ENCODE measurements at regions of chr11 and their contacts with region 1.

Region 1: GRCh38 chr11:13023423-13023822 is 14.3 kb downstream of the RASSF10 start:
- DNase-seq: no peak
- H3K4me3 ChIP-seq: no peak overlapping the region
- H3K27ac ChIP-seq: no peak overlapping the region
- H3K27me3 ChIP-seq: peaks cover 0 to 8% (median 0%) of the 10 kb centered on the region in 45 donors
- CTCF ChIP-seq: no peak

Region 2: DNA sequence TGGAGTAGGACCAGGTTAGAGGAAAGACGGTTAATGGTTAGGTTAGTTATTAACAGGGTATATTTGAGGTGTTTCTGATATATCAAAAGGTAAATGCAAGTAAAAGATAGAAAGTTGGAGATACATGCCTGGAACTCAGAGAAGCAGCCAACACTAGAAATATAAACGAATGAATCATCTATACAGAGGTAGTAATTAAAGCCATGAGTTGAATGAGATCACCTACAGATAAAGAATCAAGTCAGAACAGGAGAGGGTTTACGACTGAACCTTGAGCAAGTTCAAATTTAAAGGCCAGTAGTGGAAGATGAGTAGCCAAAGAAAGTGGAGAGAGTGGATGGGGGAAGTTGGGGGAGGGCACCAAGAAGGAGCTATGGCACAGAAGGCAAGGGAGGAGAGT is 1013.0 kb after region 1 on chr11:
- intact Hi-C with region 1: loop called in 1 of 2 experiments (anchors 5 kb)
- DNase-seq: no peak
- H3K4me3 ChIP-seq: no peak overlapping the region
- H3K27ac ChIP-seq: no peak overlapping the region
- H3K27me3 ChIP-seq: peaks cover 0 to 11% (median 0%) of the 10 kb centered on the region in 45 donors
- CTCF ChIP-seq: no peak

Measured in dorsolateral prefrontal cortex (tissue), 120 donors.